ENCODE measurements at regions of chr4 and their contacts with region 1.

Region 1: DNA sequence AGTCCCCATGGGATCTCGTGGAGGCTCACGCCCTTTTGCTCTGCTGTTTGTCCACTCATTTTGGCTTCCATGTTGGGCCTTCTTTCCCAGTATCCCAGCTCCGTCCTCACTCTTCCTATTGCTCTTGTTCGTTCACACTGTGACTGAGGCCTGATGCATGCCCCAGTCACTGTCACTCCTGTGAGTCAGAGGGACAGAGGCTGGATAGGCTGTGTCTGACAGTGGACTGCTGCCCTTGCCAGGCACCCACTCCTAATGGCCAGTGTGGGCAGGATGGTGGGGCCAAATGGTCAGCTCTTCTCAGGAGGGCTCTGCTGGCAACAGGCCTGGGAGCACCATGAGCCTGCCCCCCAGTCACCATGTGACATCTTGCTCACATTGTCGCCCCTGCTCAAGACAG is 40.0 kb downstream of the HADH start:
- DNase-seq: no peak
- H3K4me3 ChIP-seq: no peak overlapping the region
- H3K27ac ChIP-seq: no peak overlapping the region
- H3K4me1 ChIP-seq: no peaks in the 10 kb centered on the region
- H3K27me3 ChIP-seq: no peaks in the 10 kb centered on the region
- CTCF ChIP-seq: no peak
- EP300 ChIP-seq: no peak
- POLR2A ChIP-seq: no peak

Region 2: DNA sequence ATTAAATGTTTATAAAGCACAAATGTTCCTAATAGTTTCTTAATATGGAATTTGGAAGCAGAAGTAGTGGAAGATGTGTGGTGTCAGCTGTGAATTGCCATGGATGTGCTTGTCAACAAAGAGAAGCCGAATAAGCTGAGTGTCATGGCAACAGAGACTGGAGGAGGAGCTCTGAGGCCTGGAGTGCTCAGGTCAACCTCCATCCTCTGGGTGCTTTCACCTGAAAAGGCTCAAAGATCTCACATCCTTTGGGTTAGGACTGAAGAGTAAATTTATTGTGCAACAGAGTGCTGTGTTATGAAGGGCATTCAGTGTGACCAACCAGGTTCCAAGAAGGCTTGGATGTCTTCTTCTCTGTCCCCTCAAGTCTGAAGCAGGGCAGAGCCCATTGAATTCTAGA is 186.3 kb before region 1 on chr4:
- intact Hi-C with region 1: no loop called
- DNase-seq: no peak
- H3K4me3 ChIP-seq: no peak overlapping the region
- H3K27ac ChIP-seq: no peak overlapping the region
- H3K4me1 ChIP-seq: no peaks in the 10 kb centered on the region
- H3K27me3 ChIP-seq: no peaks in the 10 kb centered on the region
- CTCF ChIP-seq: no peak
- EP300 ChIP-seq: no peak
- POLR2A ChIP-seq: no peak

Region 3: GRCh38 chr4:108560616-108561015 is 530.9 kb after region 1 on chr4:
- intact Hi-C with region 1: loop called in 1 of 4 experiments (anchors 10 kb)
- DNase-seq: no peak
- H3K4me3 ChIP-seq: no peak overlapping the region
- H3K27ac ChIP-seq: no peak overlapping the region
- H3K4me1 ChIP-seq: no peaks in the 10 kb centered on the region
- H3K27me3 ChIP-seq: no peaks in the 10 kb centered on the region
- CTCF ChIP-seq: no peak
- EP300 ChIP-seq: no peak
- POLR2A ChIP-seq: no peak

Region 4: DNA sequence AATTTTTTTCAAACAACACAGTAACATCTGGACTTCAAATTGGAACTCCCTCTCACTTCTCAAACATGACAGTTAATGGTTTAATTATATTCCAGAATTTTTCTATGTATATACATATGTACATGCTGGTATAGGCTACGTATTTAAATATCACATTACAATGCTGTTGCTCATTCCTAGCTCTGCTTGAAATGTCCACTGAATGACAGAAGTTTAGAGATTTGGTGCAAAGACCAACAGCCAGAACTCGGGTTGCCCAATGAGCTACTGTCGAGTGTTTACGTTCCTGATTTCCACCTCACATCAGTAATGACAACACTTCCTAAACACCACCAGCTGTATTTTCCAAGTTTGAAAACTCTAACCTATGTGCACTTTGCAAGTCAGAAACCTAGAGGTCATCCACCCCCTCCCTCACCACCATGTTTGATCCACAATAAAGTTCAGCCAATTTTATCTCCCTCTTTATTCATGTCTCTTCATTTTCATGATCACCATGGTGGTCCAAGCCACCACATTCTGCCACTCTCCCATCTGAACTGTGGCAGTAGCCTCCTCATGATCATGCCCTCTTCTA is 541.4 kb after region 1 on chr4:
- intact Hi-C with region 1: loop called in 2 of 4 experiments (anchors 10 kb)
- DNase-seq: no peak
- H3K4me3 ChIP-seq: no peak overlapping the region
- H3K27ac ChIP-seq: no peak overlapping the region
- H3K4me1 ChIP-seq: no peaks in the 10 kb centered on the region
- H3K27me3 ChIP-seq: no peaks in the 10 kb centered on the region
- CTCF ChIP-seq: no peak
- EP300 ChIP-seq: no peak
- POLR2A ChIP-seq: no peak

Measured in ovary (tissue), 10 donors.